AG04449 (cell line): ENCODE measurements at regions of chrX and their contacts with region 1.

Region 1: GRCh38 chrX:65985922-65986588 is 53.8 kb downstream of the VSIG4 start:
- DNase-seq: peak; percentile 0
- H3K4me3 ChIP-seq: no peak overlapping the region
- CTCF ChIP-seq: peak; percentile 37

Region 2: DNA sequence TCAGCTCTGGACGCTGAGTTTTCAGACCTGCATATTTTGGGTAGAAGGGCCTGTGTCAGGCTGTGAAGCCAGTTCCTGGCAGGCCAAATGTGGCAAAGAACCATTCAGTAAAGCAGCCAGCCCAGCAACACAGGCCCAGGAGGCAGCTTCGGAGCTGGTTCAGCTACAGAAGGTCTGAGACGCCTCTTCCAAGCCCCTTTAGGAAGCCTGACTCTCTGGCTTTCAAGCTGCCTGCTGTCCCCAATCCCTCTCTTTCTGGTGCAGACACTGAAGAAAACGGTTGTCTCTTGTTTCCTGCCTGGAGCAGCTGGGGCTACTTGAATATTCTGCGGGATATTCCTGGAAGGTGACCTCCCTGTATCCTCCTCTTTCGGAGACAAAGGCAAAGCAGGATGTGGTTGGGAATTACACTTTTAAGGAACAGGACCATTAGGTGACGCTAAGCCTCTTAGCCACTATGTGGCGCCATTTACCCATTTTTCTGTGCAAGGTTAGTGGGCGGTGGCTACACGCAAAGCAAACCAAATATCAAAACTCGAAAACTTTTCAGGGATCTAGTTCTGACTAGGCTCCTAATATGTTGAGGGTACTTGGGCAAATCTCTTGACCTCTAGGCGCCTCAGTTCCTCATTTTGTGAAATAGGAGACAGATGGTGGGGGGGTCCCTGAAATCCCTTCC is 404.3 kb before region 1 on chrX:
- CTCF ChIA-PET with region 1: interaction called, 50 read pairs
- POLR2A ChIA-PET with region 1: no interaction called
- DNase-seq: no peak
- H3K4me3 ChIP-seq: no peak overlapping the region
- CTCF ChIP-seq: peak; percentile 51

Region 3: DNA sequence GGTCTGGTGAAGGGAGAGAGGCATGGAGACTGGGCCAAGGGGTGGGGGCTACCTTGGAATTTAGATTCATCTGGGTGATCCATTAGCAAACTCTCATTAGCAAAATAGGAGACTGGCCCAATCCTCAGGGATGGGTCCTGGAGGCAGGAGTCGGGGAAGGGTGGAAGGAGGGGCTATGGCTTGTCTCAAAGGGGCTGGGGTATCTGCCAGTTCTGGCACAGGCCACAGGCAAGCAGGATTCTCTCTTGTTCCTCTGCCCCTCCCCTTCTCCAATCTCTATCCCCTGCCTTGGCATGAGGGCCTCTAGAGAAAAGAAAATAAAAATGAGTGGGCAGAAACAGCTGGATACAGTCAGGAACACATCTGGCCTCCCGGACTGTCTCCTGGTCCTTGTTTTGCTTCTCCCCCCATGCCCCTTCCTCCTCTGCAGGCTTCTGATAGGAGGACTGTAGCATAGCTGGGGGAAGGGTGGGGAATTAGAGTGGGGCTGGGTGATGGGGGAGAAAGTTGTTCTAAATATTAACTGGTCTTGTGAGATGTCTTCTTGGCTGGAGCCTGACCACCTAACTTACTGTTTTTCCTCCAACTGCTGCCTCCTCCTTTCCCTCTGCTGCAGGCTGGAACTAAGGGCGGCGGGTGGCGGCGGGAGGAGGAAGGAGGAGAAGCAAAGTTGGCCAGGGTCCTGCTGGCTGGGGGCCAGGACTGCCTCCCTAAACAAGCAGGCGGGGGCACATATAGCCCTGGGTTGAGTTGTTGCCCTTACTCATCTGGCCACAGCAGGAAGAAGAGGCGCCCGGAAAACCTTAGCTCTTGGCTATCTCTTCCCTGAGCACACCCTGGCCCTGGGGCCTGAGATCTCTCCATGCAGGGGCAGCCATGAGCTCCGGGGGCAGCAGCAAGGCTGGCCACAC is 398.2 kb before region 1 on chrX:
- CTCF ChIA-PET with region 1: interaction called, 50 read pairs
- POLR2A ChIA-PET with region 1: no interaction called
- DNase-seq: no peak
- H3K4me3 ChIP-seq: no peak overlapping the region
- CTCF ChIP-seq: no peak

Region 4: DNA sequence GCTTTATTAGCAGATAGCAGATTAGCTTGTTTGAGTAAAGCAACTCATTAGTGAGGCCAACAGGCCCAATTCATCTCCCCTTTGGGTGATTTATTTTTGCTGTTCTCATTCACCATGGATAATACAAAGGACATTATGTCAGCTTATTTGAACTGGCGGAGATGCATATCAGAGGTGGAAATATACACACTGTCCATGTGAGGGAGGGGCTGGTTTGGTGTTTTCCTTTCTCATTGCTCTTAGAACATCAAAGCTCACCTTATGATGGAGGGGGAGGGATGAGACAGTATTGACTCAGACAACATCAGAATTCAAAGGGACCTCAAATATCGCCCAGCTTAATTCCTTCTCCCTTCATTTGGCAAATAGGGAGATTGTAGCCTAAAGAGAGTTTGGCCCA is 99.2 kb before region 1 on chrX:
- CTCF ChIA-PET with region 1: no interaction called
- POLR2A ChIA-PET with region 1: no interaction called
- DNase-seq: no peak
- H3K4me3 ChIP-seq: no peak overlapping the region
- CTCF ChIP-seq: no peak

Region 5: GRCh38 chrX:65971151-65971550 is 14.9 kb before region 1 on chrX:
- CTCF ChIA-PET with region 1: no interaction called
- POLR2A ChIA-PET with region 1: no interaction called
- DNase-seq: no peak
- H3K4me3 ChIP-seq: no peak overlapping the region
- CTCF ChIP-seq: no peak

Region 6: GRCh38 chrX:66931713-66932112 is 945.7 kb after region 1 on chrX:
- CTCF ChIA-PET with region 1: no interaction called
- POLR2A ChIA-PET with region 1: no interaction called
- DNase-seq: no peak
- H3K4me3 ChIP-seq: no peak overlapping the region
- CTCF ChIP-seq: no peak